Cardiac septum (tissue), 1 donor: ENCODE measurements at regions of chr4 and their contacts with region 1.

Region 1: GRCh38 chr4:128809477-128810330 is at the start of gene JADE1:
- DNase-seq: peak; percentile 94
- total RNA-seq, gene JADE1: 23.0 TPM

Region 2: DNA sequence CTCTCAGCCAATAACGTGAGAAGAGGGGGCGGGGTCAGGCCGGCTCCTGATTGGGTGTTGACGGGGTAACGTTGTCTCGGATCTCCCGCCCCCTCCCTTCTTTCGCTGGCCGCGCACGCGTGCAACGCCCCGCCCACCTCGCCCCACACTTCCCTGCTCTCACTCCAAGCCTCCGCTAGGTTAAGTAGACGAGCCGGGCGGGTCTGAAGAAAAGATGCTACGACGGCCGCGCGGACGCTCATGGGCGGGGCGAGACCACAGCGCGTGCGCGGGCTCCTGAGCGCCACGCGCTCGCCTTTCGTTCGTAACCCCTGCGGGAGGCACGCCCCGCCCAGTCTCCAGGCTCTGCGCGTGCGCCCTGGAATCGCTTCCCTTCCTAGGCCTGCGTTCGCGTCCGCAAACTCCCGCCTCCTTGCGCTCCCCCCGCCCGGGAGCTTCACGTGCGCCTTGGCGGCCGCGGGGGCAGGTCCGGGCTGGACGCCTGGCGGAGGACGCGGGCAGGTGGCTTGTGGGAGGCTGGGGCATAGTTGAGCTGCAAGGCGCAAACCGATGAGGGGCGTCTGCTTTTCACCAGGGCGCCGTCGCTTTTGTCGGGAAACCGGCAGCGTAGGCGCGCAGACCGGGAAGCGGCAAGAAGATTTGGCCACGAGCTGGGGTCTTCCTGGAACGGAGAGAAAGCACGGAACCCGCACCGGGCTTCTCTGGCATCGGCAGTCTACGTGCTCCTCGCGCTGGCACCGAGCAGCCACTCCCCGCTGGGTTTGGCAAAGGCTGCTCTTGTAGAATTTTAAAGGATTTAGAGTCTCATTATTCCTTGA is 521.6 kb before region 1 on chr4:
- intact Hi-C with region 1: loop called (anchors 5 kb)
- DNase-seq: peak; percentile 100

Region 3: DNA sequence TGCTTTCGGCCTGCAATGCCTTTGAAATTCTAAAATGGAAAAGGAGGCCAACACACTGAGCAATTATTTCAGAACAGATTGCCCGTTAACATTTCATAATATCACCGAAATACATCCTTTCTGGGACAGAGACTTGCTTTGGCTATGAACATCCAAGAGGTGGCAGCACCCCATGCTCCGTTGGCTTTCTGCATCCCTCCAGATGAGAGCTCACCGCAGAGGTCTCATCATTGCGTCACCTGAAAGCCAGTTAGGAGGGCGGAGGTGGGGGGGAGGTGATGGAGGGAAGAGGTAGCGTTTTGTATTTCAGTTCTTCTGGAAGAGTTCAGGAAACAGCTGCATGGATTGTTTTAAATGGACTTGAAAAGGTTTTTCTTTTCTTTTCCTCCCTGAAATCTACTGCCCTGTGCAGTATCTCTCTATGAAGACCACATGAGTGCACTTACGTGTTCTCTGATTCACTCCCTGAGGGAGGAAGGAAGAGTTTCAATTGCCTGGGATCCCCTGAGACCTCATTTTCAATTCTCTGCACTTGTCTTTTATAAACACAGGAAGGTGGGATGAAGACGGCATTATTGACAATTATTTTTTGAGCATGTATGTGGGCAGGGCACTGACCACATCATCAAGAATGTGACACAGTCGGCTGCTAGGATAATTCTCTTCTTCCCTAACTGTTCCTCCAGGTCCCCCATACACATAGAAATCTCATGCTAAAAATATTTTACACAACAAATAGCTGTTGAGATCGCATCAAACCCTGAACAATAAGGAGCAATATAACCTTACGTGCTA is 355.2 kb before region 1 on chr4:
- intact Hi-C with region 1: loop called (anchors 1 kb)
- DNase-seq: peak; percentile 82

Region 4: GRCh38 chr4:128565565-128566186 is 244.0 kb before region 1 on chr4:
- intact Hi-C with region 1: loop called (anchors 5 kb)
- DNase-seq: no peak

Region 5: DNA sequence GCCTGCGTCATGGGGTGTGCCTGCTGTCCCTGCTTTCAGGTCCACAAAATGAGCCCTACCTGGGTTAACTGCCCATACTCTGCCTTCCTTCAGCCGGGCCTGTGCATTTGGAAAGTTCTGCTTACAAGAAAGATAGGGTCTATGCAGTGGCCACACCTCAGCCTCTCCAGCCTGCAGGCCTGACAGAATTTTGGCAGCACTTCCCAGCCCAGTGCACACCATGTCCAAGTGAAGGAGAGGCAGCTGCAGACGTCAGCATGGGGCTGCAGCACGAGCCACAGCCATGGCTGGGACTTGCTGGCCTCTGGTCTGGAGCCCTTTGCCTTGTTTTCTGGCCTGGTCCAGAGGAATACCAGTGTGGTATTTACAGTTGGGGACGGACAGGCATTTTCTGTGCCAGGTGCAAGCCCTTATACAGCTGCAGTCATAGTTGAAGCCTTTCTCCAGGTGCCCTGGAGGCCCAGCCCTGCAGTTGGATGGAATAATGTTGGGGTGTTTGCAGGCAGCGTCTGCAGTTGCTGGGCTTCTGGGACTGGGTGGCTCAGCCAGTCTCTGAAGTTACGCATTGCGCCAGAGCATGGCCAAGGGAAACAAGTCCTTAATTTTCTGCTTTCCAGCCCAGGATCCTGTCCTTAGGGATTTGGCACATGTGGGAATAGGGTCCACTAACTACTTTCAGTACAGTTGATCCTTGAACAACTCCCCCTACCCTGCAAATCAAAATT is 26.0 kb after region 1 on chr4:
- intact Hi-C with region 1: loop called (anchors 2 kb)
- DNase-seq: peak; percentile 87

Region 6: GRCh38 chr4:129093191-129093920 is 283.7 kb after region 1 on chr4 and contains the start of gene SCLT1:
- intact Hi-C with region 1: loop called (anchors 5 kb)
- DNase-seq: peak; percentile 100
- total RNA-seq, gene SCLT1: 9.6 TPM